ENCODE measurements at regions of chr2 and their contacts with region 1.

Region 1: GRCh38 chr2:196399722-196400691 is 228.6 kb upstream of the STK17B start:
- DNase-seq: no peak
- ATAC-seq: peak; percentile 80

Region 2: DNA sequence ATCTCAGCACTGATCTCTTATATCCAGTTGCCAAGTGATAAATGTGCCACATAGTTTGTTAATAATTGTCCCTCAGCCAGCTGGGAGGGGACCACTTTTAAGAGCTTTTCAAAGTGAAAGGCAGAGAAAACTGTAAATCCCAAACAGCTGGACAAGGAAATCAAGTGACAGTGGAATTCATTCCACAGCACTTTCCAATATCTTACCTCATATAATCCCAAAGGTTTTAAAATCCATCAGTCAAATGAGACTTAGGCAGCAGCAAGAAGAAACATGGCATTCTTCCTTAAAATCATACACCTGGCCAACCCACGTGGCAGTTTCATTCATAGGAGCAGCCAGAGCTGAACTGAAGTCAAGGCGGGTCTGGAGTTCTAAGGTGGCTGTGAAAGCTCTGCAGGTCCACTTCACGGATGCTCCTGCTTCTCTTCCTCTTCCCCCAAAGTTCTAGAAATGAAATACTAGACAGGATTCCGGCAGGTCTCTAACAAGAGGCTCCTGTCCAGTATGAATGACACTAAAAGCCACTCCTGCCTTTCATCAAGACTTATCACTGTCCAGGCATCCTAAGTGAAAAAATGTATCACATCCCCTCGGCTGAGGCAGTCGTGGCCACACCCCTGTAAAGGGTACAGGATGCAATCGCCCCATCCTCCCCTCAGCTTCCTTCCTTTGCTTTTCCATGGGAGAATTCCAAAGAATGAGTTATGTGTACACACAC is 38.2 kb before region 1 on chr2:
- intact Hi-C with region 1: loop called (anchors 5 kb)
- DNase-seq: no peak
- ATAC-seq: peak; percentile 27

Region 3: DNA sequence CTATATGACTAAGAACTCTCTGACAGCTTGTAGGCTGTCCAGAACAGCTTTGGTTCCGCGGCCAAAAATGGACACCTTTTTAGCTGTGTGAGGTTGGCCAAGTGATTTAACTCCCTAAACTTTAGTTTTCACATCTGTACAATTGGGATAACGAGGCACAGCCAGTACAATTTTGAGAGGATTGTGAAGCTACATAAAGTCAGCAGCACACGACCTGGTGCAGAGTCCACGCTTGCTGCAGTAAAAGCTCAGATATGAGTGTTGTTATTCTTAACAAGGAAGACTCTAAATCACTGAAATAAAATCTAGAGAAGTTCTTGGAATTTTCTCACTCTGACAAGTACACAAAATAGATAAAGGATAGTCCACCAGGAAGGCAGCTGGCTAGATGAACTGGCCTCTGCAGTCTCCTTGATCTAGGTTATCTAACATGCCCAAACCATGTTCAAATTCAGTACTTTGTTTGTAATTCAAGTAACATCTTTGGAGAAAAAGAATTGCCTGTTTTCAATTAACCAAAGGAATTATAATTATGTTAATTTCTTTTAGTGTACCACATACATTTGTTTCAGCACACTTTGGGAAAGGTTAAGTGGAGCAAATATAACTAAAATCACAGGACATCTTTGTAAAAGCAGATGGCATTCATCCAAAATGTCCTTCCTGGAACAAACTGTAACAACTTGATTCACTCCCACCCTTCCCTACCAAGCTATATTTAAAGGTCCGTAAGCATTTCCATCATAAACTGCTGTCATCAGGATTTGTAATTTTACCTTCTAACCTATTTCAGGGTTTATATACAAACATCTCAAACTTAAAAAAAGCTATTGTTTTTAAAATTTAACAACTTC is 27.0 kb before region 1 on chr2:
- intact Hi-C with region 1: loop called (anchors 2 kb)
- DNase-seq: no peak
- ATAC-seq: peak; percentile 59

Region 4: GRCh38 chr2:197079832-197080555 is 680.0 kb after region 1 on chr2:
- intact Hi-C with region 1: no loop called
- DNase-seq: no peak
- ATAC-seq: peak; percentile 82